Lower lobe of right lung (tissue), 2 donors: ENCODE measurements at regions of chr16 and their contacts with region 1.

Region 1: DNA sequence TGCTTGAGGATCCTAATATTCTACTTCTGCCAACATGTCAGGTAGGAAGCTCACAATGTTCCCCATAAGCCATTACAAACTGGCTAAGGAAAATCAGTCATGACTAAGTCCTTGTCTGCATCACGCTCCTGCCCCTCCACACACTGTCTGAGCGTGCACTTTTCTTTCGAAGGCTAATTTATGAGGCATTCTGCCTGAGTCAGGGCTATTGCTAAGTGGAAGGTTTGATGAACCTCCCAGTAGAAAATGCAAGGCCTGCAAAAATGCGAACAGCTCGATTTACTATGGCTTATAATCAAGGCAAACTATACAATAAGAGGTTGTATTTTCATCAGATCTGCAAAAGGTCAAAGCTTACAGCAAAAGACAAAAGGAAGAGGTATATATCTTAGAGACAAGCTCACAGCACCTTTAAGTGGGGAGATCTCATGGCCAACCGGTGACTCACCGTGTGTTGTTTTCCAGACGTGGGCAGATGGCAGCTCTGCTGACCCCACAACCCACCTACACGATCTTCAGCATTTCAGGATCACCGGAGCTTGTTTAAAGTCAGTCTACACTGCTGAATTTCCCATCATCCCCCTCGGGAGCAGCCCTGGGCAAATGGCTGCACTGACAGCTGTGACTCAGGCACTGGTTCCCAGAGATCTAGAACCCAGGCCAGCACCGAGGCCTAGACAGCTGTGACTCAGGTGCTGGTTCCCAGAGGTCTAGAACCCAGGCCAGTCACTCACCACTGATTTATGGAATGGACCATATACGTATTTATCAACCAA is 26.1 kb downstream of the MEAK7 start:
- DNase-seq: no peak
- ATAC-seq: no peak
- H3K4me3 ChIP-seq: no peak overlapping the region
- H3K27ac ChIP-seq: no peak overlapping the region
- H3K4me1 ChIP-seq: no peaks in the 10 kb centered on the region
- H3K27me3 ChIP-seq: no peaks in the 10 kb centered on the region
- CTCF ChIP-seq: no peak

Region 2: DNA sequence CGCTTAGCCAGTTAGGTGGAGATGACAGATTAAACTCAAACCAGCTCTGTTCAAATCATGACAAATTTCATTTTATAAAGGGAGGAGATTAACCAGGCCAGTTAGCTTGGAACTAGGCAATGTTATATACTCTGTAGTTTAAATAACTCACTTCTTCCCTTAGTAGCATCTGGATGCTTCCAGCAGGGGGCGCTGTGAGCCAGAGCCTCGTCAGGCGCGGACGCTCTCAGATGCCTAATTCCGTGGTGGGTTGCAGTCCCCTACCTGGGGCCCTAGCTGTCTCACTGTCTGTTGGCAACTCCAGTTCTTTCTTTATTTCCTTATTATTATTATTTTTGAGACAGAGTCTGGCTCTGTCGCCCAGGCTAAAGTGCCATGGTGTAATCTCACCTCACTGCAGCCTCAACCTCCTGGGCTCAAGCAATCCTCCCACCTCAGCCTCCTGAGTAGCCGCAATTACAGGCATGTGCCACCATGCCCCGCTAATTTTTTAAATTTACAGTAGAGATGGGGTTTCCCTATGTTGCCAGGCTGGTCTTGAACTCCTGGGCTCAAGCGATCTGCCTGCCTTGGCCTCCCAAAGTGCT is 201.0 kb before region 1 on chr16:
- intact Hi-C with region 1: loop called (anchors 5 kb)
- DNase-seq: peak; percentile 82
- ATAC-seq: peak; percentile 80 to 85
- H3K4me3 ChIP-seq: no peak overlapping the region
- H3K27ac ChIP-seq: no peak overlapping the region
- H3K4me1 ChIP-seq: no peaks in the 10 kb centered on the region
- H3K27me3 ChIP-seq: no peaks in the 10 kb centered on the region
- CTCF ChIP-seq: peak; percentile 89